ENCODE measurements at regions of chr10 and their contacts with region 1.

Region 1: DNA sequence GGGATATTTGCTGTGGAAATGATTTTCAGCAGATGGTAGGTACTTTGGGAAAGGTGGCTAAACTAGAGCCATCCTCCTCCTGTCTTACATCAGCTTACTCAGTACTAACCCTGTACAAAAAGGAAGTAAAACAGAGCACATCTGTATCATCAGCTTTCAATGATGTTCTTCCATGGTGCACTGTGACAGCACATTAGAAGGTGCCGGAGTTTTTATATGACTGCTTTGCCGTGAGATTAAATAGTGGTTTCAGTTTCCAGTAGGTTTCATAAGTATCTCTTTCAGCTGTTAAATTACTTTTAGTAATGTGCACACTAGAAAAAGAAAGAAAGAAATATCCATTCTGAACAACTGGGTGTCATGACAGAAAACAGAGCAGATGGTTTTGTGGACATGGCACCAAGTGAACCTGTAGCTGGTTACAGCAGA is 86.5 kb downstream of the ARID5B start:
- DNase-seq: peak; percentile 48
- H3K4me3 Mint-ChIP-seq: peak overlapping the region; percentile 59
- H3K27ac Mint-ChIP-seq: peak overlapping the region; percentile 98
- H3K4me1 Mint-ChIP-seq: peaks cover 85% of the 10 kb centered on the region
- H3K27me3 Mint-ChIP-seq: no peaks in the 10 kb centered on the region

Region 2: DNA sequence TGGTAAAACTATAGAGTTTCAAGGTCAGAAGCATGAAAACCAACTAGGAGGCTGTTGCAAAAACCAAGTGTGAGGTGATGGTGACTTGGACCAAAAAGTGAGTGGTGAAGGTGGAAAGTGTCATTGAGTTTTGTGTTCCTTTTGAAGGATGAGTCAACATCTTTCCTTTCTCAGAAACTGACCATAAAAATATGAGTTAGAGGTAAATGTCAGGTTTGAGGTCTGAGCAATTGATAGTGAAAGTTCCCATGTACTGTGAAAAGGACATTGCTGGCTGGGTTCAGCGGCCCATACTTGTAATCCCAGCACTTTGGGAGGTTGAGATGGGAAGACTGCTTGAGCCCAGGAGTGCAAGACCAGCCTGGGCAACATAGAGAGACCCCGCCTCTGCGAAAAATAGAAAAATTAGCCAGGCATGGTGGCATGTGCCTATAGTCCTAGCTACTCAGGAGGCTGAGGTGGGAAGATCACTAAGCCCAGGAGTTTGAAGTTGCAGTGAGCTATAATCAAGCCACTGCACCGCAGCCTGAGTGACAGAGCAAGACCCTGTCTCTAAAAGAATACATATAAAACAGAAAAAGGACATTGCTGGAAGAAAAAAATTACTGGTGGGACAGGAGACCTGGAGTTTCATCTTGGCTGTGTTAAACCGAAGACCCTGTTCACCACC is 175.8 kb before region 1 on chr10:
- CTCF ChIA-PET with region 1: no interaction called
- DNase-seq: no peak
- H3K4me3 Mint-ChIP-seq: no peak overlapping the region
- H3K27ac Mint-ChIP-seq: no peak overlapping the region
- H3K4me1 Mint-ChIP-seq: peaks cover 2% of the 10 kb centered on the region
- H3K27me3 Mint-ChIP-seq: no peaks in the 10 kb centered on the region

Region 3: DNA sequence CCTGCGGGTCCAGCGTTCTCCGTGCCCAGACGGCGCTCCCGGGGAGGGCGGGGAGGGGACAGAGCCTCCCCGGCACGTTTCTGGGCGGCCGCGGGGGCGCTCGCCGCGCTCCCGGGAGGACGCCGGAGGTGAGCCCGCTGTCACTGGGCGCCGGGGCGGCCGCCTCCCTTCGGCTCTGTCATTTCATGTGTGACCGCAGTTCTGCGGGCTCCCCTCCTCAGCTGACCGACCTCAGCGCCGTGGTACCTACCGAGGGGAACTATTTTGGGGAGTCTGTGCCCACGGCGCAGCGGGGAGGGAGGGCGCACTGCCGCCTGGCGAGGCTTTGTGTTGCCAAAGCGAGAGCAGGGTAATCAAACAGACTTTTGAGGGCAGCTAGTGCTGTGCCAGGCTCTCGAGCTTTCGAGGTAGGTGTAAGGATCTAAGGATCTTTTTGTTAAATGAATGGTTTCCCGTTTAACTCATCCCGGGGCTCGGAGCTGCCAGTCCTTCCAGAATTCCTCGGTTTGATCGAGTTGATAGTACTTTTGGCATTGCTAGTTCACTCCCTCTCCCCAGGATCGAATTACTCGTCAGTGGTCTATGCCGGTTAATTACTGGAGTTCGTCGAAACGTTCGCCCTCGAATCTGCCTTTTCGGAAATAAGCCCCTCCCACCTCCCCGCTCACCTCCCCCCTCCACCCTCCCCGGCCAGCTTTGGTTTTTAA is 84.6 kb before region 1 on chr10:
- CTCF ChIA-PET with region 1: interaction called, 19 read pairs
- DNase-seq: peak; percentile 81
- H3K4me3 Mint-ChIP-seq: peak overlapping the region; percentile 94
- H3K27ac Mint-ChIP-seq: peak overlapping the region; percentile 99
- H3K4me1 Mint-ChIP-seq: peaks cover 55% of the 10 kb centered on the region
- H3K27me3 Mint-ChIP-seq: no peaks in the 10 kb centered on the region

Measured in activated naive CD4-positive, alpha-beta T cell treated with anti-CD3 and anti-CD28 coated beads, Interleukin-2, amount 10 ng/mL, durations not matched to agents 7 days and 5 days (primary cell).